ENCODE measurements at regions of chr5 and their contacts with region 1.

Region 1: DNA sequence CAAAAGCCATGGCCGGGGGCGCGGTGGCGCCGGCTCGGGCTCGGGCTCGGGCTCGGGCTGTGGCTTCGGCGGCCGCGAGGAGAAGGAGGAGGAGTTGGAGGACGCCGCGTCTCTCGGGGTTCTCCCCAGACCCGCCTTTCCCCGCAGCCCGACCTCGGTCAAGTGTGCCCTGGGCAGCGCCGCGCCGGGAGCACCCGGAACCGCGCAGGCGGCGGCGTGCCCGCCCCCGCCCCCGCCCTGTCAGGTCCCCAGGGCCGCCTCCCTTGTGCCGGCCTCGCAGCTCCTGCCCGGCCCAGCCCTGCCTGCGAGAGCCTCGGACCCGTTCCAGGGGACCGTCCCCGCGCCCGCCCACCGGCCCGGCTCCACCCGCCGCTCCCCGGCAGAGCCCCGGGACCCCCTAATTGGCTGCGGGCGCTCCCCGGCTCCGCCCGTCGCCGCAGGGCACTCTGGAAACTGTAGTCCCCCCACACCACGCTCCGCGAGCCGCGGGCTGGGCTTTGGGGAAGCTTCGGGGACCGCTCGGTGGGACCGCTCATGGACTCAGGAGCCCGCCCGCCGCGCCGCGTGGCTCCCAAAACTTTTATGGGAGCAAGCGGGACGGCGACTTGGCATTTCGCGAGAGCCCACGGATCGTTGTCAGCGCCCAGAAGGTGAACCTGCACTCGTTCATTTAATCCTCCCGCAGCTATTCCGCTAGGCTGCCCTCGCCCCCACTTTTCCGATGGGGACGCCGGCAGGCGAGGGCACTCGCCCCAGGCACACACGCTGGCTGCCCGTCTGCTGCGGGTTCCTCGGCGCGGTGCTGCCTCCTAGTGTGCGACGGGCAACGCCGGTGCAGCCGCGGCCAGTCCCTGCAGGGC is at the start of gene STK10:
- DNase-seq: peak; percentile 87 to 97
- ATAC-seq: peak; percentile 86 to 90
- H3K4me3 ChIP-seq: peak within 1 kb of the TSS; percentile 94
- H3K27ac ChIP-seq: peak within 1 kb of the TSS; percentile 77 to 88
- H3K4me1 ChIP-seq: peaks cover 8% of the 10 kb centered on the region
- CTCF ChIP-seq: peak; percentile 92
- EP300 ChIP-seq: no peak
- POLR2A ChIP-seq: peak; percentile 64
- RAD21 ChIP-seq: peak; percentile 85 to 93
- polyA plus RNA-seq, gene STK10: 4.3 and 5.3 TPM in 2 replicates

Region 2: GRCh38 chr5:172059661-172060100 is 128.6 kb before region 1 on chr5:
- CTCF ChIA-PET with region 1: interaction called, 11 read pairs
- POLR2A ChIA-PET with region 1: no interaction called
- DNase-seq: peak in 1 of 2 experiments; percentile 29
- ATAC-seq: peak; percentile 56 to 74; a peak in 5 of 6 replicates
- H3K4me3 ChIP-seq: no peak overlapping the region
- H3K27ac ChIP-seq: no peak overlapping the region
- H3K4me1 ChIP-seq: no peaks in the 10 kb centered on the region
- CTCF ChIP-seq: peak; percentile 73
- EP300 ChIP-seq: no peak
- POLR2A ChIP-seq: no peak
- RAD21 ChIP-seq: peak; percentile 71 to 80

Region 3: GRCh38 chr5:172106511-172107356 is 81.5 kb before region 1 on chr5:
- CTCF ChIA-PET with region 1: interaction called, 93 read pairs
- POLR2A ChIA-PET with region 1: interaction called, 4 read pairs
- DNase-seq: peak; percentile 40 to 58
- ATAC-seq: peak in 1 of 2 experiments; percentile 70; a peak in 3 of 6 replicates
- H3K4me3 ChIP-seq: peak overlapping the region; percentile 34
- H3K27ac ChIP-seq: peak overlapping the region; percentile 46 to 73
- H3K4me1 ChIP-seq: peaks cover 36% of the 10 kb centered on the region
- CTCF ChIP-seq: peak; percentile 93
- EP300 ChIP-seq: no peak
- POLR2A ChIP-seq: no peak
- RAD21 ChIP-seq: peak; percentile 77 to 93

Region 4: DNA sequence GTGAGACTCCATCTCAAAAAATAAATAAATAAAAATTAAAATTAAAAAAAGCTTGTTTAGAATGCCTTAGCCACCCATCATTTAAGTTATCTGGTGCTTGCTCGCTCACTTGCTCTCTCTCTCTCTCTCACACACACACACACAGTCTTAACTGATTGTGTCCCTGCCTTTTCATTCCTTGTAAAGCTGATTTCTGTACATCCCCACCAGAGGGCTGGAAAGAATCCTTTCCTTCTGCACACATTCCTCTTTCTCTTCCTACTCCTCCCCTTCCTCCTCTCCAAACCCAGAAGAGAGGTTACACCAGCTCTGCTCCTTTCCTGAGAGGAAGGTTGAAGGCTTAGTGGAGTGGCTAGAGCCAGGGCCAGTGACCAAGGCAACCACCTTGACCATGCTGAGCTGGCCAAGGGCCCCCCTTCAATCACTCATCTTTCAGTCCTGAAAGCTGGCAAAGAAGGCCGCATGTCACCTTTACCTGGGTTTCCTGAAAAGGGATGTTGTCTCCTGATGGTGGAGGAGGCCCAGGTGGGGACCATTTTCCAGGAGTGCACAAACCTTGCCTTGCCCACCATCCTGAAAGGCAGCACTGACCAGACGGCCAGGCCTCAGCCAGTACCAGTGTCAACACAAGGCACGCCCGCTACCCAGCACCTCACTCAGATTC is 25.8 kb before region 1 on chr5:
- CTCF ChIA-PET with region 1: interaction called, 17 read pairs
- POLR2A ChIA-PET with region 1: interaction called, 3 read pairs
- DNase-seq: peak in 1 of 2 experiments; percentile 38
- ATAC-seq: peak; percentile 70 to 80; a peak in 5 of 6 replicates
- H3K4me3 ChIP-seq: no peak overlapping the region
- H3K27ac ChIP-seq: no peak overlapping the region
- H3K4me1 ChIP-seq: no peaks in the 10 kb centered on the region
- CTCF ChIP-seq: no peak
- EP300 ChIP-seq: no peak
- POLR2A ChIP-seq: no peak
- RAD21 ChIP-seq: peak in 1 of 2 experiments; percentile 6; a peak in 1 of 5 replicates

Region 5: DNA sequence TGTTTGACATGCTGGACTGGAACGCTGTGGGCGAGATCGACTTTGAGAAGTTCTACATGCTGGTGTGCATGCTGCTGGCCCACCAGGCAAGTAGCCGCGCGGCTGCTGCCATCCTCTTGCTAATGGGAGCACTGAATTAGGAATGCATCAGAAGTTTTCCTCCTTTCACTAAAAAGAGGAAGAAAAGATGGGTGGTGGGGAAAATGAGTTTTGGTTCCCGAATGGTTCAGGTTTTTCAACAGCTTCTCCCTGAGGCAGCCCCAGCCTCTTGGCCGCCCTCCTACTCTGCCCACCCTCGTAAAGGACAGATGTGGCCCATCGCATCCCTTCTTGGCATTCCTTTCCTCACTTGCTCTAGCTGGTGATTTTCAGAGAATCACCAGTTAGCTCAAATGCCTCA is 11.2 kb after region 1 on chr5:
- CTCF ChIA-PET with region 1: interaction called, 49 read pairs
- POLR2A ChIA-PET with region 1: interaction called, 4 read pairs
- DNase-seq: no peak
- ATAC-seq: no peak
- H3K4me3 ChIP-seq: no peak overlapping the region
- H3K27ac ChIP-seq: no peak overlapping the region
- H3K4me1 ChIP-seq: no peaks in the 10 kb centered on the region
- CTCF ChIP-seq: no peak
- EP300 ChIP-seq: no peak
- POLR2A ChIP-seq: no peak
- RAD21 ChIP-seq: no peak

Region 6: DNA sequence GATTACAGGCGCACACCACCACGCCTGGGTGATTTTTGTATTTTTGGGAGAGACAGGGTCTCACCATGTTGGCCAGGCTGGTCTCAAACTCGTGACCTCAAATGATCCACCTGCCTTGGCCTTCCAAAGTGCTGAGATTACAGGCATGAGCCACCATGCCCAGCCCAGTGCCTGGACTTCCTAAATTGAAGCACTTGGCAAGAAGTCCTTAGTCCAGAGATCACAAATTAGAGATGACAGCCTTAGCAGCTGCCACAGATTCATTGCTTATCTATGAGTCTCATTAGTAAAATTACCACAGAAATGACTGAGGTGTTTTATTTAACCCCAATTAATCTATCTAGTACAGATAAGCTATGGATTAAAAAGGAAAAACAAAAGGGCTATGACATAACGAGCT is 24.9 kb after region 1 on chr5:
- CTCF ChIA-PET with region 1: interaction called, 19 read pairs
- POLR2A ChIA-PET with region 1: no interaction called
- DNase-seq: no peak
- ATAC-seq: no peak
- H3K4me3 ChIP-seq: no peak overlapping the region
- H3K27ac ChIP-seq: no peak overlapping the region
- H3K4me1 ChIP-seq: peaks cover 13% of the 10 kb centered on the region
- CTCF ChIP-seq: no peak
- EP300 ChIP-seq: no peak
- POLR2A ChIP-seq: no peak
- RAD21 ChIP-seq: no peak

Measured in A549 (cell line).